Sigmoid colon (tissue), 7 donors: ENCODE measurements at regions of chr17 and their contacts with region 1.

Region 1: DNA sequence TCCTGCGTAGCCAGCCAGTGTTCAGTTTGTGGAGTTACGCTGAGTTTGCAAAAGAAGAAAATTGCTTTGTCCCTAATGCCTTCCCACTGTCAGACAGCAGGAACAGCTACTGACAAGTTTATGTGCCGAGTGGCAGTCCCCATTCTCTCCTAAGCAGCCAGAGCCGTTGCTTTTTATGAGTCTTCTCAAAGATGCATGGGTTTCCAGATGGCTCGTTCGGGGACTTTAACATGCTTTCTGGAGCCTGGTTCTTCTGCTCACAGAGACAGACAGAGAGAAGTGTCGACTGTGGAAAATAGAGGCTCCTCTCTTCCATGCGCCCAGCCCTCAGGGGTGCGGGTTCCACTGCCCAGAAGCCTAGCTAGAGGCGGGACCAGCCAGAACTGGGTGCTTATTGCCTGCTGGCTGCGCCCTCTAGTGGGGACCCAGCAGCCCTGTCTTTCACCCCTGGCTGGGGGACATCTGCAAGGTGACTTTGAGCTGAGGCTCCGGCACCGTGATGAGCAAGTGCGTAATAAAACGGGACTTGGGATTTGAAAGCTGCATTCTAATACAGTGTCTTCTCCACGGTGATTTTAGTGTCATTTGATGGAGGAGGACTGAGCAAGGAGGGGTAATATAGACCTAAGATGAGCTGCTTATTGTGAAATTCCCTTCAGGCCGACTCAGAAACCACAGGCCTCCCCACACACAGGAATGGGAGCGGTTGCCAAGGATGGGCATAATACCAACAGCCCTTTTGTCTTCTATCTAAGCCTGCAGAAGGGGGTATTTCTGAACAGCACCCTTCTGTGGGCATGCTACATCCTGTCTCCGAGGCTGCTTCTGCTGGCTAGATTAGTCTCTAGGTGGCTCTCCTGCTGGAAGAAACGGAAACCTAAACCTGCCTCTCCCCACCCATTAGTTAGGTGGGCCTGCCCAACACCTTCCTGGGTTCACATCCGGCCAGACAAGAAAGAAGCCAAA is 73.1 kb downstream of the CCDC182 start:
- DNase-seq: peak; percentile 89
- H3K4me3 ChIP-seq: no peak overlapping the region
- H3K27ac ChIP-seq: no peak overlapping the region
- H3K4me1 ChIP-seq: peaks cover 0 to 11% (median 5%) of the 10 kb centered on the region in 4 donors
- H3K27me3 ChIP-seq: no peaks in the 10 kb centered on the region
- CTCF ChIP-seq: peak; percentile 73 to 90 (median 81)
- EP300 ChIP-seq: no peak
- POLR2A ChIP-seq: no peak

Region 2: GRCh38 chr17:57243171-57243948 is 428.6 kb before region 1 on chr17:
- intact Hi-C with region 1: loop called (anchors 2 kb)
- DNase-seq: peak; percentile 81
- H3K4me3 ChIP-seq: no peak overlapping the region
- H3K27ac ChIP-seq: no peak overlapping the region
- H3K4me1 ChIP-seq: no peaks in the 10 kb centered on the region
- H3K27me3 ChIP-seq: no peaks in the 10 kb centered on the region
- CTCF ChIP-seq: peak; percentile 96 to 99 (median 98)
- EP300 ChIP-seq: no peak
- POLR2A ChIP-seq: no peak

Region 3: GRCh38 chr17:57597531-57598453 is 74.2 kb before region 1 on chr17:
- intact Hi-C with region 1: loop called (anchors 2 kb)
- DNase-seq: no peak
- H3K4me3 ChIP-seq: no peak overlapping the region
- H3K27ac ChIP-seq: peak overlapping the region in 1 of 4 donors; percentile 29
- H3K4me1 ChIP-seq: peaks cover 0 to 4% (median 2%) of the 10 kb centered on the region in 4 donors
- H3K27me3 ChIP-seq: no peaks in the 10 kb centered on the region
- CTCF ChIP-seq: peak in 3 of 4 experiments; percentile 70 to 73 (median 73)
- EP300 ChIP-seq: no peak
- POLR2A ChIP-seq: no peak